OCI-LY7 (cell line): ENCODE measurements at regions of chr3 and their contacts with region 1.

Region 1: GRCh38 chr3:47315069-47315647 is 32.4 kb downstream of the KLHL18 start:
- DNase-seq: no peak
- H3K4me3 ChIP-seq: no peak overlapping the region
- H3K27ac ChIP-seq: no peak overlapping the region
- H3K4me1 ChIP-seq: no peaks in the 10 kb centered on the region
- CTCF ChIP-seq: no peak

Region 2: DNA sequence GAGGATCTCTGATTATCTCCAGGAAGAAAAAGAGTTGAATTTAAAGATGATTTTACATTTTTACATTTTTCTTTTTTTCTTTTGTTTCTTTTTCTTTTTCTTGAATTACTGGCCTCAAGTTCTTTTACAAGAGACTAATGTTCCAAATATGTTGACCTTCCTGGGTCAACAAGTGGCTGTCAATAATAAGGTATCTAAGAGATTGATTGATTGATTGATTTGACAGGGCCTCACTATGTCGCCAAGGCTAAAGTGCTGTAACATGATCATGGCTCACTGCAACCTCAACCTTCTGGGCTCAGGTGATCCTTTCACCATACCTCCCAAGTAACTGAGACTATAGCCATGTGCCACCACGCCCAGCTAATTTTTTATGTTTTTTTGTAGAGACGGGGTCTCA is 77.1 kb before region 1 on chr3:
- CTCF ChIA-PET with region 1: no interaction called
- POLR2A ChIA-PET with region 1: no interaction called
- intact Hi-C with region 1: no loop called
- DNase-seq: no peak
- H3K4me3 ChIP-seq: no peak overlapping the region
- H3K27ac ChIP-seq: no peak overlapping the region
- H3K4me1 ChIP-seq: no peaks in the 10 kb centered on the region
- CTCF ChIP-seq: no peak

Region 3: GRCh38 chr3:47291158-47291753 is 23.9 kb before region 1 on chr3:
- CTCF ChIA-PET with region 1: no interaction called
- POLR2A ChIA-PET with region 1: interaction called, 11 read pairs
- intact Hi-C with region 1: no loop called
- DNase-seq: no peak
- H3K4me3 ChIP-seq: peak overlapping the region; percentile 49
- H3K27ac ChIP-seq: peak overlapping the region; percentile 83
- H3K4me1 ChIP-seq: peaks cover 80% of the 10 kb centered on the region
- CTCF ChIP-seq: no peak

Region 4: DNA sequence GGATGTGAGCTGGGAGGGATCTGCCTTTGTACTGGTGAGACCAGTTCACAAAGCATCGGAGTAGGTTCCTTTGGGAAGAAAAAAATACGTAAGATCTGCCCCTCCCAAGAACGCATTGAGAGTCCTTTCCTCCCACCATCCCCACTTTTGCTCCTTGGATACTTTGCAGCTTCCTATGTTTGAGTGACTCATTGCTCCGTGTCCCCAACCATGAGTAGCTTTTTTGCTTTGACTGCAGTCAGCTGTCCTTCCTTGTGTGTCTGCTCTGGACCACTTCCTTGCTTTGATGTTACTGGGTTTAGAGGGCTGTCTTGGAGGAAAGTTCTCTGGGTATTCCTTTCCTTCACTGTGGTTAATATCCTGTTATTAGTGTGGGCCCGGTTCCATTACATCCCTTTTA is 22.5 kb after region 1 on chr3:
- CTCF ChIA-PET with region 1: no interaction called
- POLR2A ChIA-PET with region 1: no interaction called
- intact Hi-C with region 1: no loop called
- DNase-seq: no peak
- H3K4me3 ChIP-seq: no peak overlapping the region
- H3K27ac ChIP-seq: no peak overlapping the region
- H3K4me1 ChIP-seq: no peaks in the 10 kb centered on the region
- CTCF ChIP-seq: no peak